Activated CD4-positive, alpha-beta T cell treated with anti-CD3 and anti-CD28 coated beads, Interleukin-2, amount 10 ng/mL, durations not matched to agents 24 days and 14 days (primary cell): ENCODE measurements at regions of chr6 and their contacts with region 1.

Region 1: GRCh38 chr6:57172136-57173055 is at the start of gene BAG2:
- DNase-seq: peak; percentile 97
- H3K4me3 Mint-ChIP-seq: peak within 1 kb of the TSS; percentile 89
- H3K27ac Mint-ChIP-seq: peak within 1 kb of the TSS; percentile 93
- H3K4me1 Mint-ChIP-seq: peaks cover 24% of the 10 kb centered on the region
- H3K27me3 Mint-ChIP-seq: no peaks in the 10 kb centered on the region
- total RNA-seq, gene BAG2: 13.1 and 13.2 TPM in 2 replicates

Region 2: DNA sequence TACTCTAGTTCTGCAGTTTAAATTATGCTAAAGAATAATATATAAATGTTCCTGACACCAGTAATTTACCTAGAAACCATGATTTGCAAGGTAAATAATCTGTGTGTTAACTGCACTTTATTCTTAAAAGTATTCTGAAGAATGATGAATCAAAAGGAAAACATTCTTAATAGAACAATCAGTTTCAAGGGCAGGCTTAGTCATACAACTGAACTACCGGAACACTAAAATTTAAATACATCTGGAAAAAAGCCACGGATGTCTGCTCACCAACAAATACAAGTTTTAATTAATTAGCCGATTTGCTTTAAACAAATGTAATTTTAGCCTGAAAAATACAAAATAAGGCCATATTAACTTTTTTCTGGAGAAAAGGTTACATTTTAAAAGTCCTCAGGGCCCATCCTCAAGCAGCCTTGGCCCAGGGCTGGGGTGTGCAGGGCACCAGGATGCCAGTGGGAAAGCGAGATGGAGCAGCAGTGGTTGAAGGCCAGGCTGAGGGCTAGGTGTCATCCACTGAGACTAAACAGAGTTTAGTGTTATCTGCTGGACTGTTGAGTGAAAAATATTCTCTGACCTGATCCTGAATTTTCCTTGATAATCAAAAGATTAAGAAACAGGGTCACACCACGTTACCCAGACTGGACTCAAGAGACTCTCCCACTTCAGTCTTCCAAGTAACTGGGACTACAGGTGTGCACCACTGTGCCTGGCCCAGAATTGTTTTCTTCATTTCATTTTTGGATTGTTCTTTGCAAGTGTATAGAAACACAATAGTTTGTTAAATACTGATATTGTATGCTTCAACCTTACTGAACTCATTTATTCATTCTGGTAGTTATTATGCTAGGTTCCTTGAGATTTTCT is 441.5 kb before region 1 on chr6:
- intact Hi-C with region 1: no loop called
- DNase-seq: no peak
- H3K4me3 Mint-ChIP-seq: no peak overlapping the region
- H3K27ac Mint-ChIP-seq: no peak overlapping the region
- H3K4me1 Mint-ChIP-seq: no peaks in the 10 kb centered on the region
- H3K27me3 Mint-ChIP-seq: peaks cover 4% of the 10 kb centered on the region

Region 3: GRCh38 chr6:56955171-56956045 is 217.0 kb before region 1 on chr6:
- intact Hi-C with region 1: loop called (anchors 5 kb)
- DNase-seq: peak; percentile 90
- H3K4me3 Mint-ChIP-seq: peak overlapping the region; percentile 86
- H3K27ac Mint-ChIP-seq: peak overlapping the region; percentile 17
- H3K4me1 Mint-ChIP-seq: peaks cover 15% of the 10 kb centered on the region
- H3K27me3 Mint-ChIP-seq: peaks cover 62% of the 10 kb centered on the region

Region 4: GRCh38 chr6:57089687-57090460 is 82.5 kb before region 1 on chr6 and contains the start of gene ZNF451:
- intact Hi-C with region 1: loop called (anchors 1 kb)
- DNase-seq: peak; percentile 99
- H3K4me3 Mint-ChIP-seq: peak within 1 kb of the TSS; percentile 70
- H3K27ac Mint-ChIP-seq: peak within 1 kb of the TSS; percentile 70
- H3K4me1 Mint-ChIP-seq: peaks cover 27% of the 10 kb centered on the region
- H3K27me3 Mint-ChIP-seq: no peaks in the 10 kb centered on the region
- total RNA-seq, gene ZNF451: 58.1 and 61.2 TPM in 2 replicates

Region 5: DNA sequence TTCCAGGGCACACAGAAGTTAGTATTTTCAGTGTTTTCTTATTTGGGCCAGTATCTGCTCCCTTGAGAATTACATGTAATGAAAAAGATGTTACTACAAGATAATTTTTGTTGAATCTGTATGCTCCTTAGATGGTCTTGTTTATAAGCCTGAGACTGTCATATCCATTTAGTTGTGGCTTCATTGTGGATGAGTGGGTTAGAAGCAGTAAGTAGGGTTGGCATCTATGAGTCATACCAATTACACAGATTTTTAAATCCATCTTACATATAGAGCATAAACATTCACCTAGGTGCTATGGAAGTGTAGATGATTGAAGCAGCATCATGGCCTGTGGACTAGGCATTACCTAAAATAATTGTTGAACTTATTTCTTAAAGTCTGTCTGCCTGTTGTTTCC is 13.7 kb before region 1 on chr6:
- intact Hi-C with region 1: loop called (anchors 2 kb)
- DNase-seq: no peak
- H3K4me3 Mint-ChIP-seq: no peak overlapping the region
- H3K27ac Mint-ChIP-seq: peak overlapping the region; percentile 51
- H3K4me1 Mint-ChIP-seq: peaks cover 3% of the 10 kb centered on the region
- H3K27me3 Mint-ChIP-seq: no peaks in the 10 kb centered on the region

Region 6: DNA sequence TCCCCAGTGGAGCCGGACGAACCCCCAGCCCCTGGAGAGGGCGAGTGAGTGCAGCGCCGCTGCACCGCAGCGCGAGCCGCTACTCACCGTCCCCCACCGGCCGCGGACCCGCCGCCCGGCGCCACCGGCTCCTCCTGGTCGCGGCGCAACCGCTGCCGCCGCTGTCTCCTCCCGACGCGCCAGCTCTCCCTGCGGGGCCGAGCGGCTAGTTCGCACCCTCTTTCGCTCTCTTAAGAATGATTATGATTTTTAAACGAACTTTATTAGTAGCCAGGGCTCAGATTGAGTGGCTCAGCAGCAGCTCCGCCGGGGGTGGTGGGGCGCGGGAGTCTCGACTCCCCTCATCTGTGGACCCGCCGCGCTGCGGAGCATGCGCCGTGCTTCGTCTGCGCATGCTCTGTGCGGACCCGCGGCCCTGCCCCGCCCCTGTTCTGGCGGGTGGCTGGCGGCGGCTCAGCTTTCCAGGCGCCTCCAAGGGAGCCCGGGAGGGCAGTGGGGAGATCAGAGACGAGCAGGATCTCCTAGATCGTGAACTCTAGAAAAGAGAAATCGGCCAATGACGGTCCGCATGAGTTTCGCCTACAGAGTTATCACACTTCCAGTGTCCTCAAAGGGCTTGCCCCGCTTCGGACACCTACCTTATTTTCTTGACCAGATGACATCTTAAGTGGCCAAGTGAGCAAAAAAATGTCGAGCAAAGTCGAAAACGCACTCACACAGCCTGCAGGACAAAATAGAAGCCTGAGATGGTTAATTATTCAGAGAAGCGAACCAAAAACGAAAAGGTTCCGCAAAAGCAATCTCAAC is 49.7 kb after region 1 on chr6 and contains the start of gene RAB23:
- intact Hi-C with region 1: loop called (anchors 1 kb)
- DNase-seq: peak; percentile 97
- H3K4me3 Mint-ChIP-seq: peak within 1 kb of the TSS; percentile 93
- H3K27ac Mint-ChIP-seq: peak within 1 kb of the TSS; percentile 92
- H3K4me1 Mint-ChIP-seq: peaks cover 13% of the 10 kb centered on the region
- H3K27me3 Mint-ChIP-seq: peaks cover 37% of the 10 kb centered on the region
- total RNA-seq, gene RAB23: 3.0 and 4.0 TPM in 2 replicates

Region 7: GRCh38 chr6:57267586-57268293 is 95.3 kb after region 1 on chr6:
- intact Hi-C with region 1: no loop called
- DNase-seq: peak; percentile 65
- H3K4me3 Mint-ChIP-seq: no peak overlapping the region
- H3K27ac Mint-ChIP-seq: no peak overlapping the region
- H3K4me1 Mint-ChIP-seq: no peaks in the 10 kb centered on the region
- H3K27me3 Mint-ChIP-seq: no peaks in the 10 kb centered on the region